Mammary epithelial cell (primary cell): ENCODE measurements at regions of chr10 and their contacts with region 1.

Region 1: GRCh38 chr10:16519908-16520861 is 1.5 kb downstream of the C1QL3 start:
- DNase-seq: no peak
- H3K4me3 ChIP-seq: peak overlapping the region in 2 of 3 experiments; percentile 16 to 44
- H3K27ac ChIP-seq: no peak overlapping the region
- H3K4me1 ChIP-seq: peaks cover 9% of the 10 kb centered on the region
- H3K27me3 ChIP-seq: peaks cover 18% of the 10 kb centered on the region
- CTCF ChIP-seq: no peak

Region 2: DNA sequence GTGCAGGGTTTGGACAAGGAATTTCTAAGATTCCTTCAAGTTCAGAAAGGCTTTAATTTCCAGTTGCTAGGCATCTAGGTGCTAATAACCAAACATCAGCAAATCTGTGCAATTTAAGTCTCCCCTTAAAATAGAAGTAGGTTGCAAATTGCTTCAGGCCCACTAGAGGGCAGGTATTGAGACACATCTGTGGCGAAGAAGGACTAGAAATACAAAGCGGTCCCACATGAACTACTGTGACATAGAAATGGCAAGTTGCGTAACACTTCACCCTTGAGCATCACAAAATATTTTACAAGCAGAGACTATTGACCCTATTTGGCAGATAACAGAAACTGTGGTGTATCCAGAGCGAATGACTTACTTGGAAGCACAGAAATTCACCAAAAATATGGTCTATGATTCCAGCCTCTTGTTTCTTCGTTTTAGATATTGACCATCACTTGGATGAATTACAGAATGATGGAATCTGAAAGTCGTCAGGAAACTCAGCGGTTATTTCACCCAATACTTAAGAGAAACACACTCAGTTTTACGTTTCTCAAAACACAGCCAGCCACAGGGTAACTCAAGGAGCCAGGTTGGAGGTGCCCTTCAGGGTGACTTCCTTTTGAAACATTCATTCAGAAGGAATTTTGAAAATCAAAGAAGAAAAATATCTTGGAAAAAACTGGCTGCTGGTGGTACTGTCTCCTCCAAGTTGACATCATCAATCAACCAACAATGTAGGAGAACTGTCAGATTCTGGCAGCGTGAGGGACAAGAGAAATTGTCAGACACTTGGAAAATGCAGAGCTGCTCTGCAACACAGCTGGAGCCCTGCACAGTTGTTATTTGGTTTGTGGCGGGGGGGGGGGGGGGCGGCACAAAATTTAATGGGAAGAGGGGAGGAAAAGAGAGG is 403.5 kb before region 1 on chr10:
- CTCF ChIA-PET with region 1: no interaction called
- dilution Hi-C with region 1: no loop called
- in situ Hi-C with region 1: no loop called
- intact Hi-C with region 1: loop called (anchors 5 kb)
- DNase-seq: peak; percentile 20
- H3K4me3 ChIP-seq: no peak overlapping the region
- H3K27ac ChIP-seq: no peak overlapping the region
- H3K4me1 ChIP-seq: no peaks in the 10 kb centered on the region
- H3K27me3 ChIP-seq: no peaks in the 10 kb centered on the region
- CTCF ChIP-seq: peak; percentile 53 to 67

Region 3: GRCh38 chr10:16360016-16360415 is 160.2 kb before region 1 on chr10:
- CTCF ChIA-PET with region 1: no interaction called
- dilution Hi-C with region 1: no loop called
- in situ Hi-C with region 1: no loop called
- intact Hi-C with region 1: no loop called
- DNase-seq: no peak
- H3K4me3 ChIP-seq: no peak overlapping the region
- H3K27ac ChIP-seq: no peak overlapping the region
- H3K4me1 ChIP-seq: no peaks in the 10 kb centered on the region
- H3K27me3 ChIP-seq: peaks cover 2% of the 10 kb centered on the region
- CTCF ChIP-seq: no peak

Region 4: GRCh38 chr10:16481052-16481728 is 39.0 kb before region 1 on chr10:
- CTCF ChIA-PET with region 1: no interaction called
- dilution Hi-C with region 1: no loop called
- in situ Hi-C with region 1: no loop called
- intact Hi-C with region 1: no loop called
- DNase-seq: no peak
- H3K4me3 ChIP-seq: no peak overlapping the region
- H3K27ac ChIP-seq: no peak overlapping the region
- H3K4me1 ChIP-seq: no peaks in the 10 kb centered on the region
- H3K27me3 ChIP-seq: no peaks in the 10 kb centered on the region
- CTCF ChIP-seq: no peak

Region 5: DNA sequence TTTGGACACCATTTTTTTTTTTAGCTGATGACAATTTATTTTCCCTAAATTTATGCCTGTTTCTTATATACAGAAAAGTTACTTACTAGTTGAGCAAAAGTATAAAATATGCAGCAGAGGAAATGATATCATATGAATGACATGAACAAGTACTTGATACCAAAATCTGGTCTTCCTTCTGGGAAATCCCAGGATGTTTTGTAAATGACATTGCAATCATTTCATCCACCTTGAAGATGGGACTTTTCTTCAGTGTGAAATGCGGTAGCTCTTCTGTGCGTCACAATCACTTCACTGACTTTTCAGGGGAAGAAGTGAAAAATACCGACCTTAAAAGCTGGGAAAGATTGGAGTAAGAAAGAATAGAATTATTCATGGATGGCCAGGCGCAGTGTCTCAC is 22.3 kb before region 1 on chr10:
- CTCF ChIA-PET with region 1: interaction called, 11 read pairs
- dilution Hi-C with region 1: no loop called
- in situ Hi-C with region 1: no loop called
- intact Hi-C with region 1: no loop called
- DNase-seq: no peak
- H3K4me3 ChIP-seq: no peak overlapping the region
- H3K27ac ChIP-seq: no peak overlapping the region
- H3K4me1 ChIP-seq: no peaks in the 10 kb centered on the region
- H3K27me3 ChIP-seq: no peaks in the 10 kb centered on the region
- CTCF ChIP-seq: no peak